ENCODE measurements at regions of chr10 and their contacts with region 1.

Region 1: DNA sequence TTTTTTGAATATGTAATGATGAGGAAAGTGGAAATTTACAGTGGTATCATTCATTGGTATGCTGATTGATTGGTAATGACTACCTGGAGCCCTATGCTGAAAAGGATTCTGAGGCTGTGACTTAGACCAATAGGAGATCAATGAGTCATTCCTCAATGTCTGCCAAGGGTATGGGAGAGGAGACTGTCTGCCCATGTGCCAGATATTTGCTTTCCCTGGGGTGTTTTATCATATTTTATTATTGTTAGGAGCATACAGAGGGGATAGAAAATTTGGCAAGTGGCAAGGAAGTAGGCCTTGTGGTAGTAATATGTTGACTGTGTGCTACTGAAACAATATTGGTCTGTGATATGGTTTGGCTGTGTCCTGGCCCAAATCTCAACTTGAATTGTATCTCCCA is 54.8 kb downstream of the ASAH2B start:
- DNase-seq: no peak
- H3K4me3 ChIP-seq: no peak overlapping the region
- H3K27ac ChIP-seq: no peak overlapping the region
- H3K4me1 ChIP-seq: no peaks in the 10 kb centered on the region
- H3K27me3 ChIP-seq: no peaks in the 10 kb centered on the region
- CTCF ChIP-seq: no peak

Region 2: GRCh38 chr10:50885097-50885859 is 90.8 kb after region 1 on chr10 and contains the start of gene A1CF:
- intact Hi-C with region 1: loop called (anchors 5 kb)
- DNase-seq: peak; percentile 69
- H3K4me3 ChIP-seq: peak within 1 kb of the TSS; percentile 21
- H3K27ac ChIP-seq: peak within 1 kb of the TSS; percentile 62
- H3K4me1 ChIP-seq: no peaks in the 10 kb centered on the region
- H3K27me3 ChIP-seq: no peaks in the 10 kb centered on the region
- CTCF ChIP-seq: no peak
- total RNA-seq, gene A1CF: 38.9 to 64.3 TPM

Measured in colonic mucosa (tissue), 4 donors.